Common myeloid progenitor, CD34-positive (primary cell): ENCODE measurements at regions of chr5 and their contacts with region 1.

Region 1: DNA sequence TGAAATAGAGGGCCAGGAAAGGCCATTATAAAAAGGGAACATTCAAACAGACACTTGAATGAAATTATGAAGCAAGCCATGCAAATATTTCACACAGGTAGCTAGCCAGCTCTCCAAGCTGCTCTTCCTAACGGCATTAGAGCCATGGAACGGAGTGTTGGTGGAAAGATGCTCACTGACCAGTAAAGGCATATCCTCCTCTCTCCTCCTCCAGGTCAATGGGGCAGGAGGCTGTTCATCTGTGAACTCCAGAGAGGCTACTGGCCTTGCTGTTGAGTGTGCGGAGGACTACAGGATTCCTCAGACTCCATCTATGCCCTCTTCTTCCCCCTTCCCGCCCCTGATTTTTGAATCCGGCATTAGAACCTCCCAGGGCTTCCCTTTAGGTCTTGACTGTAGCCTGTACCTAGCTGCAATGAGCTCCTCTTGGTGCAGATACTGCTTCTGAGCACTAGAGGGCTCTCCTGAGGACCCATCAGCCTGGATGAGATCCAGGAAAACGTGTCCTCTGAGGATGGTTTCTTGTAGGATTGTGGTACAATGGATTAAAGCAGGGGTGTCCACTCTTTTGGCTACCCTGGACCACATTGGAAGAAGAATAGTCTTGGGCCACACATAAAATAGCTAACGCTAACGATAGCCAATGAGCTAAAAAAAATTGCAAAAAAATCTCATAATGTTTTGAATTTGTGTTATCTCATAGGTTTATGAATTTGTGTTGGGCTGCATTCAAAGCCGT is 162.2 kb downstream of the SREK1 start:
- DNase-seq: peak; percentile 44 to 62 (median 48)
- H3K4me3 ChIP-seq: no peak overlapping the region
- H3K27ac ChIP-seq: no peak overlapping the region
- H3K4me1 ChIP-seq: peaks cover 0 to 5% (median 0%) of the 10 kb centered on the region in 4 experiments
- H3K27me3 ChIP-seq: peaks cover 0 to 4% (median 0%) of the 10 kb centered on the region in 5 experiments

Region 2: DNA sequence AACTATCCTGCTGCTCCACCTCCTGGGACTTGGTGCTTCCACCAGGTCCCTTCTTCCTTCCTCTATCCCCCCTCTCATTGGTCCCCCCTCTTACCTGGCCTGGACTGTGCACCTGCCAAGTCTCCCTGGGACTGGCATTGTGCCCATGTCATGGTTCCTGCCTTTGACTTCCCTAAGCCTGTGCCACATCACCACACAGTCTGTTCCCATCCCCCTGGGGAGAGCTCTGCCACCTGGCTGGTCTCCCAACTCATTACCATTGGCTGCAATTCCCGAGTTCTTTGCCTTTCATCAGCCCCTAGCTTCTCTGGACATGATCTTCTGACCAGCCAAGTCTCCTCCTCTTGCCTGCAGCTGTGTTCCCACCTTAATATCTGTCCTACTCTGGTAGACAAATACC is 18.1 kb after region 1 on chr5:
- CTCF ChIA-PET with region 1: interaction called, 25 read pairs
- POLR2A ChIA-PET with region 1: no interaction called
- DNase-seq: no peak
- H3K4me3 ChIP-seq: no peak overlapping the region
- H3K27ac ChIP-seq: no peak overlapping the region
- H3K4me1 ChIP-seq: no peaks in the 10 kb centered on the region
- H3K27me3 ChIP-seq: peaks cover 0 to 2% (median 0%) of the 10 kb centered on the region in 5 experiments

Region 3: GRCh38 chr5:66742083-66742895 is 436.0 kb after region 1 on chr5:
- CTCF ChIA-PET with region 1: interaction called, 10 read pairs
- POLR2A ChIA-PET with region 1: no interaction called
- DNase-seq: peak in 2 of 3 donors; percentile 15 to 21
- H3K4me3 ChIP-seq: no peak overlapping the region
- H3K27ac ChIP-seq: no peak overlapping the region
- H3K4me1 ChIP-seq: peaks cover 0 to 8% (median 1%) of the 10 kb centered on the region in 4 experiments
- H3K27me3 ChIP-seq: no peaks in the 10 kb centered on the region

Region 4: DNA sequence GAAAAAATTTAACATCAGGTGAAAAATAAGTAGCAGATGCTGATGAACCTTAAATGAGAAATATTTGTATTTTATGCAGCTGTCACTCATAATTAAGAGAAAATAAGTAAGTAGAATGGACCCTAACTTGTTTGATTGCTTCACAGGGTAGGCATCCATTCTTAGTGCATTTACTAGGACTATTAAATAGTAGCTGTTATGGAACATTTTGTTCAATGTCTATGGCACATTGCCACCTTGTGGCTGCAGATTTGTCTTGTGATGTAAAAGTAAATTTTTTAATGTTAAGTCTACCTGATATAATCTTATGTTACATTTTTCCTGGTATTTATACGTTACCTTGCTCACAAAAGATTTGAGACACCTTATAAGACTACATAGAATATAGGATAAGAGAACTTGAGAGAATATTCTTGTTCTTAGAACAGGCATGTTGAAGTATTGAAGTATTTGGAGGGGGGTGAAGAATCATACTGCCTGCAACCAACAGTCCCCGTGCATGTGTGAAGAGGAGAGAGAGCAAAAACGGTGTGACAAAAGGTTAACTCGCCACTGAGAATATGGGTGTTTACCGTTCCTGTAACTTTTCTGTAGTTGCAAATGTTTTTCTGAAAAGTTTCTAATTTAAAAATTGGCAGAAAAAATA is 451.0 kb after region 1 on chr5:
- CTCF ChIA-PET with region 1: interaction called, 134 read pairs
- POLR2A ChIA-PET with region 1: interaction called, 3 read pairs
- DNase-seq: peak; percentile 54 to 76 (median 72)
- H3K4me3 ChIP-seq: no peak overlapping the region
- H3K27ac ChIP-seq: no peak overlapping the region
- H3K4me1 ChIP-seq: no peaks in the 10 kb centered on the region
- H3K27me3 ChIP-seq: peaks cover 0 to 6% (median 0%) of the 10 kb centered on the region in 5 experiments

Region 5: DNA sequence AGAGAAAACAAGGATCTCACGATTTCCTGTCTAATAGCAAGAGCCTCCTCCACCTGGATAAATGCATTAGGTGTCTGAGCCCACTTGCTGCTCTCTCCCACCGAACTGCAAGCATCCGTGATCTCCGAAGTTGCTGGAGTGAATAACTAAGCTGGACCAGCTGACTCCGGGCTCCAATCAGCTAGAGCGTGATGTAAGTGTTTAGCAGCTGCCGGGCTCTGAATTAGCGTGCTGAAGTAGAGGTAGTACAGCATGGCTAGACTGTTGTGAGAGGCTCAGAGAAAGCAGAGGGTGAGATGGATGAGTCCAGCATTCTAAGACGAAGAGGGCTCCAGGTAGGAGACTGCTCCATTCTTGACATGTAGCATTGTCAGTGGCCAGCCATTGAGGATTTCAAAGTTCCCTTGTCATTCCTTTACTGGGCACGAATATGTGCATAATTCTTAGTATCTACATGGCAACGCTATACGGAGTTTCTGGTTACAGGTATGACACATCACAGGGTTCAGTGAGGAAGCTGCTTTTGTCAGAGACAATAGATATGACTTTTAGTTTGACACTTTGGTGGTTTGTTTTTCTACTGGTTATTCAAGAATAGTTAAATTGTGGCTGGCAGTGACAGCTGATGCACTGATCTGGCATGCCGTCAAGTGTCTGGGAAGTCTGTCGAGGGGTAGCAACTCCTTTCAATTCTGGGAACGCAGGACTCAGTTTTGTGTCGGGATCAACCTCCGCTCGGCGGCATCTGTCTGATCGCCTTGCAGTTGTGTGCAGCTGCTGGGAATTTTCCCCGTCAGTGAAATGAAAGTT is 522.5 kb after region 1 on chr5:
- CTCF ChIA-PET with region 1: interaction called, 13 read pairs
- POLR2A ChIA-PET with region 1: no interaction called
- DNase-seq: peak; percentile 45 to 83 (median 75)
- H3K4me3 ChIP-seq: peak overlapping the region in 6 of 7 experiments; percentile 51 to 74 (median 67)
- H3K27ac ChIP-seq: no peak overlapping the region
- H3K4me1 ChIP-seq: peaks cover 3 to 16% (median 12%) of the 10 kb centered on the region in 4 experiments
- H3K27me3 ChIP-seq: peaks cover 0 to 27% (median 6%) of the 10 kb centered on the region in 5 experiments